ENCODE measurements at regions of chr2 and their contacts with region 1.

Region 1: GRCh38 chr2:9949584-9950513 is 1.6 kb upstream of the GRHL1 start:
- DNase-seq: no peak
- ATAC-seq: peak; percentile 3; the same call in 1 of the 2 replicates
- H3K4me3 Mint-ChIP-seq: peak overlapping the region; percentile 87
- H3K27ac Mint-ChIP-seq: no peak overlapping the region
- H3K4me1 Mint-ChIP-seq: peaks cover 19% of the 10 kb centered on the region
- H3K27me3 Mint-ChIP-seq: peaks cover 62% of the 10 kb centered on the region
- CTCF ChIP-seq: no peak

Region 2: GRCh38 chr2:9843229-9844035 is 106.4 kb before region 1 on chr2 and contains the start of gene TAF1B:
- CTCF ChIA-PET with region 1: interaction called, 10 read pairs
- POLR2A ChIA-PET with region 1: no interaction called
- DNase-seq: peak; percentile 90
- ATAC-seq: peak; percentile 92
- H3K4me3 Mint-ChIP-seq: peak within 1 kb of the TSS; percentile 86
- H3K27ac Mint-ChIP-seq: peak within 1 kb of the TSS; percentile 96
- H3K4me1 Mint-ChIP-seq: peaks cover 19% of the 10 kb centered on the region
- H3K27me3 Mint-ChIP-seq: peaks cover 4% of the 10 kb centered on the region; the same call in 1 of the 2 replicates
- CTCF ChIP-seq: no peak
- total RNA-seq, gene TAF1B: 27.0 to 31.2 TPM (median 28.8 TPM) in 3 replicates

Region 3: DNA sequence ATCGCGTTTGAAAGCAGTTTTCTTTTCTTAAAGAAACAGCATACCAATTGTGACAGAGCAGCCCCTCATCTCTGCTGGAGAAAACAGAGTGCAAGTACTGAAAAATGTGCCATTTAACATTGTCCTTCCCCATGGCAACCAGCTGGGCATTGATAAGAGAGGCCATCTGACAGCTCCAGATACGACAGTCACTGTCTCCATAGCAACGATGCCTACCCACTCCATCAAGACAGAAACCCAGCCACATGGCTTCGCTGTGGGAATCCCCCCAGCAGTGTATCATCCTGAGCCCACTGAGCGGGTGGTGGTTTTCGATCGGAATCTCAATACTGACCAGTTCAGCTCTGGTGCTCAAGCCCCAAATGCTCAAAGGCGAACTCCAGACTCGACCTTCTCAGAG is 11.2 kb after region 1 on chr2:
- CTCF ChIA-PET with region 1: no interaction called
- POLR2A ChIA-PET with region 1: no interaction called
- DNase-seq: no peak
- ATAC-seq: no peak
- H3K4me3 Mint-ChIP-seq: no peak overlapping the region
- H3K27ac Mint-ChIP-seq: no peak overlapping the region
- H3K4me1 Mint-ChIP-seq: no peaks in the 10 kb centered on the region
- H3K27me3 Mint-ChIP-seq: no peaks in the 10 kb centered on the region
- CTCF ChIP-seq: no peak